PC-3 (cell line): ENCODE measurements at regions of chr6 and their contacts with region 1.

Region 1: GRCh38 chr6:138817822-138818308 is 22.0 kb downstream of the ECT2L start:
- DNase-seq: peak; percentile 98
- ATAC-seq: peak; percentile 88
- H3K4me3 ChIP-seq: peak overlapping the region; percentile 24; the same call in 1 of the 2 replicates
- H3K27ac ChIP-seq: peak overlapping the region; percentile 99
- H3K4me1 ChIP-seq: peaks cover 36% of the 10 kb centered on the region
- H3K27me3 ChIP-seq: no peaks in the 10 kb centered on the region
- CTCF ChIP-seq: no peak

Region 2: GRCh38 chr6:138970856-138971425 is 153.1 kb after region 1 on chr6:
- CTCF ChIA-PET with region 1: interaction called, 7 read pairs
- POLR2A ChIA-PET with region 1: no interaction called
- intact Hi-C with region 1: loop called (anchors 5 kb)
- DNase-seq: peak; percentile 81
- ATAC-seq: peak; percentile 72
- H3K4me3 ChIP-seq: no peak overlapping the region
- H3K27ac ChIP-seq: peak overlapping the region; percentile 85
- H3K4me1 ChIP-seq: peaks cover 52% of the 10 kb centered on the region
- H3K27me3 ChIP-seq: no peaks in the 10 kb centered on the region
- CTCF ChIP-seq: no peak

Region 3: GRCh38 chr6:138987640-138988468 is 170.0 kb after region 1 on chr6 and contains the start of gene REPS1:
- CTCF ChIA-PET with region 1: interaction called, 4 read pairs
- POLR2A ChIA-PET with region 1: no interaction called
- intact Hi-C with region 1: loop called (anchors 1 kb)
- DNase-seq: peak; percentile 83
- ATAC-seq: peak; percentile 87
- H3K4me3 ChIP-seq: peak within 1 kb of the TSS; percentile 95
- H3K27ac ChIP-seq: peak within 1 kb of the TSS; percentile 56
- H3K4me1 ChIP-seq: peaks cover 33% of the 10 kb centered on the region
- H3K27me3 ChIP-seq: no peaks in the 10 kb centered on the region
- CTCF ChIP-seq: peak; percentile 76
- total RNA-seq, gene REPS1: 27.4 and 37.4 TPM in 2 replicates

Region 4: DNA sequence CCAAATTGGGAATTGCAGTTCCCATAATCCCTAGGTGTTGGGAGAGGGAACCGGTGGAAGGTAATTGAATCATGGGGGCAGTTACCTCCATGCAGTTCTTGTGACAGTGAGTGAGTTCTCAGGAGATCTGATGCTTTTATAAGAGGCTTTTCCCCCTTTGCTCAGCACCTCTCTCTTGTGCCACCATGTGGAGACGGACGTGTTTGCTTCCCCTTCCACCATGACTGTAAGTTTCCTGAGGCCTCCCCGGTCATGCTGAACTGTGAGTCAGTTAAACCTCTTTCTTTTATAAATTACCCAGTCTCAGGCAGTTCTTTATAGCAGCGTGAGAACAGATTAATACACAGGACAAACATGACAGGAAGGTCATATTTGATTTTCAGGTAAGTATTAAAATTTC is 291.7 kb after region 1 on chr6:
- CTCF ChIA-PET with region 1: no interaction called
- POLR2A ChIA-PET with region 1: no interaction called
- intact Hi-C with region 1: loop called (anchors 10 kb)
- DNase-seq: peak; percentile 43
- ATAC-seq: no peak
- H3K4me3 ChIP-seq: no peak overlapping the region
- H3K27ac ChIP-seq: no peak overlapping the region
- H3K4me1 ChIP-seq: no peaks in the 10 kb centered on the region
- H3K27me3 ChIP-seq: no peaks in the 10 kb centered on the region
- CTCF ChIP-seq: peak; percentile 43; the same call in 1 of the 2 replicates

Region 5: DNA sequence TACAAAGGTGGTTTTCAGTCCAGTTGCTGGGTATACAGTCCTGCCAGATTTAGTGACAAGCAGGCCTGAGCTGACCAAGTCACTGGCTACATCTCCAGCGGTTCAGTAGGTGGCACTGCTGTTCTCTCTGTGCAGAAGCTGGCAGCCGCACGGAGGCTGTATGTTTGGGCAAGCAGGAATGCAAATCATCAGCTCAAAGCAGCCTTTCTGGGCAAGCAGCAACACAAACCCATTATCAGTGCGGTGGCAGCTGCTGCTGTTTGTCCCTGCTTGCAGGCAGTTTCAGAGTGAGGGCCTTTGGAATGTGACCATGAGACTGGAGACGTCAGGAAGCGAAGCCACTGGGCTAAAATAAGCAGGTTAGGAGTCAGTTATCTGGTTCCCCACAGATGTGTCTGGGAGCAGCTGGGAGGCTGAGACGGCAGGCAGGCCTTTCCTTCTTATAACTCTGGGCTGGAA is 401.4 kb after region 1 on chr6:
- CTCF ChIA-PET with region 1: no interaction called
- POLR2A ChIA-PET with region 1: no interaction called
- intact Hi-C with region 1: loop called (anchors 10 kb)
- DNase-seq: peak; percentile 75
- ATAC-seq: peak; percentile 100
- H3K4me3 ChIP-seq: no peak overlapping the region
- H3K27ac ChIP-seq: no peak overlapping the region
- H3K4me1 ChIP-seq: no peaks in the 10 kb centered on the region
- H3K27me3 ChIP-seq: no peaks in the 10 kb centered on the region
- CTCF ChIP-seq: peak; percentile 85

Region 6: GRCh38 chr6:139364302-139364981 is 546.6 kb after region 1 on chr6:
- CTCF ChIA-PET with region 1: interaction called, 4 read pairs
- POLR2A ChIA-PET with region 1: no interaction called
- intact Hi-C with region 1: loop called (anchors 2 kb)
- DNase-seq: peak; percentile 64
- ATAC-seq: no peak
- H3K4me3 ChIP-seq: no peak overlapping the region
- H3K27ac ChIP-seq: no peak overlapping the region
- H3K4me1 ChIP-seq: peaks cover 7% of the 10 kb centered on the region; the same call in 1 of the 2 replicates
- H3K27me3 ChIP-seq: no peaks in the 10 kb centered on the region
- CTCF ChIP-seq: peak; percentile 69